ENCODE measurements at regions of chr19 and their contacts with region 1.

Region 1: DNA sequence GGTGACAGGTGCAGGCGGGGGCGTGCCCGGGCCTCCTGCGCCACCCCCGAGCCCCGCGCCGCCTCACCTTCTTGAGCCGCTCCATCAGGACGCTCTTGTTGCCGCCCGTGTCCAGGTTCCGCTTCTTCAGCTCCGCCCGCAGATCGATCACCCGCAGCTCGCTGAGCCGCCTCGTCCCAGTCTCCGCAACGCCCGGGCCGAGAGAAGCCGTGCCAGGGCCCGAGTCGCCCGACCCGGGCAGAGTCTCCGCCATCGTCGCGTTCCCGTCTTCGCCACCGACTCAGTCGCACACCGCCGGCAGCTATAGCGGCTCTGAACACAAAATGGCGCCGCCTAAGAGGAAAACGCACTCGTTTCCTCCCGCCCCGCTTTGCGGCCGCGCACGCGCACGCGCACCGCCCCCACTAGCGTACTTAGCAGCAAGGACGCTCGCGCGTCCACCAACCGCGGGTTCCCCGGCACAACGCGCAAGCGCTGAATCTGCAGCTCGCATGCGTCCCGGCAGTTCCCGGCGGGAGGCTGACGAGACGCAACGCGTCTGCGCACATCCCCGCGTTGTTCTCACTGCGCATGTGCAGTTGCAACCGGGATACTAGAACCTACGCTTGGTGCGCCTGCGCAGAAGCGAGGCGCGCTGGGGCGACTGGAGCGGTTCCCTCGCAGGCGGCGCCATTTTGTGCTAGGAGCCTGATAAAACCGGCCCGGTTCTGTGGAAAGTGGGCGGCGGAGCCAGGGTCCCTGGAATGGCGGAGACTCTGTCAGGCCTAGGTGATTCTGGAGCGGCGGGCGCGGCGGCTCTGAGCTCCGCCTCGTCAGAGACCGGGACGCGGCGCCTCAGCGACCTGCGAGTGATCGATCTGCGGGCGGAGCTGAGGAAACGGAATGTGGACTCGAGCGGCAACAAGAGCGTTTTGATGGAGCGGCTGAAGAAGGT is at the starts of genes SAFB and SAFB2:
- DNase-seq: peak; percentile 99
- ATAC-seq: peak; percentile 93
- H3K4me3 Mint-ChIP-seq: peak within 1 kb of the TSS; percentile 100
- H3K27ac Mint-ChIP-seq: peak within 1 kb of the TSS; percentile 100
- H3K4me1 Mint-ChIP-seq: peaks cover 64% of the 10 kb centered on the region
- H3K27me3 Mint-ChIP-seq: no peaks in the 10 kb centered on the region
- CTCF ChIP-seq: no peak
- total RNA-seq, gene SAFB: 124 to 132 TPM
- total RNA-seq, gene SAFB2: 70.8 to 78.0 TPM

Region 2: GRCh38 chr19:5635446-5635845 is 12.7 kb after region 1 on chr19:
- CTCF ChIA-PET with region 1: interaction called, 3 read pairs
- POLR2A ChIA-PET with region 1: interaction called, 17 read pairs
- intact Hi-C with region 1: no loop called
- DNase-seq: no peak
- ATAC-seq: no peak
- H3K4me3 Mint-ChIP-seq: no peak overlapping the region
- H3K27ac Mint-ChIP-seq: no peak overlapping the region
- H3K4me1 Mint-ChIP-seq: peaks cover 46% of the 10 kb centered on the region
- H3K27me3 Mint-ChIP-seq: no peaks in the 10 kb centered on the region
- CTCF ChIP-seq: no peak

Region 3: DNA sequence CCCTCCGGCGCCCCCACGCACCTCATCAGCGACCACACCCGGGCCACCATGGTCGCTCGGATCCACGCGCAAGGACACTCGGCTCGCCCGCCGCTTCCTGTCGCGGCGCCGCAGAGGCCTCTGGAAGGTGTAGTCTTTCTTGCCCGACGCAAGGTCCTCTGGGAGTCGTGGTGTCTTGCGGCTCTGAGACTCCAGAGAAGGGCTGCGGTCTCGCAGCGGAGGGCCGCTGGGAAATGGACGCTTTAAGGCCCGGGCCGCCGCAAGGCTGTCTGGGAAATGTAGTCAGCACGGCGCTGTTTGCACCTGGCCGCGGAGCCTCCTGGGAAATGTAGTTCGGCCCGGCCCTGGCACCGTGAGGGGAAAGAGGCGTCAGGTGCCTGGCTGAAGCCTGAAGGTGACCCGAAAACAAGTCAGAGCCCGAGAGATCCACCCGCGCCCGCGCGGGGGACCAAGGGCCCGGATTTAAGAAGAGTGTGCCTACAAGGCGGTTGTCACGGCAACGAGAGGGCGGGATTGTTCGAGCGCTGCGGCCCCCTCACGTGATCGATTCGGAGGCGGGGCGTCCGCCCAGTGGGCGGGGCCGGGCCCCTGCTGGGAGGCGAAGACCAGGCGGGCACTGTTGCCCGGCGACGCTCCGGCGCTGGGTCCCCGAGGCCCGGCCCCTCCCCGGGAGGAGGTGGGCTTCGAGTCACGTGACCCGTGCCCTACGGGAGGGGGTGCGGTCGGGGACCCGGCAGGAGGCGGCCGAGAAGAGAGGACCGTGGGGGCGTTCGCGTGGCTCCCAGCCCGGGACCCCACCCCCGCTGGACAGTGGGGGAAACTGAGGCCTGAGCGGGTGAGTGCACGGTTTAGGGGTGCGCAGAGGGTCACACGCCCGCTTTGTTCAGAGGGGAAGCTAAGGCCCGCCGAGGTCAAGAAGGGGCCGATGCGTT is 58.0 kb after region 1 on chr19 and contains the starts of genes HSD11B1L and MICOS13:
- CTCF ChIA-PET with region 1: interaction called, 32 read pairs
- POLR2A ChIA-PET with region 1: interaction called, 13 read pairs
- intact Hi-C with region 1: loop called (anchors 5 kb)
- DNase-seq: peak; percentile 99
- ATAC-seq: peak; percentile 95
- H3K4me3 Mint-ChIP-seq: peak within 1 kb of the TSS; percentile 96
- H3K27ac Mint-ChIP-seq: peak within 1 kb of the TSS; percentile 95
- H3K4me1 Mint-ChIP-seq: peaks cover 15% of the 10 kb centered on the region
- H3K27me3 Mint-ChIP-seq: no peaks in the 10 kb centered on the region
- CTCF ChIP-seq: no peak
- total RNA-seq, gene HSD11B1L: 2.7 to 3.5 TPM
- total RNA-seq, gene MICOS13: 49.4 TPM

Measured in activated CD8-positive, alpha-beta T cell treated with anti-CD3 and anti-CD28 coated beads for 36 hours (primary cell).